ENCODE measurements at regions of chr22 and their contacts with region 1.

Region 1: GRCh38 chr22:45640291-45640940 is 31.2 kb upstream of the ATXN10 start:
- DNase-seq: no peak
- H3K4me3 ChIP-seq: no peak overlapping the region
- H3K27ac ChIP-seq: no peak overlapping the region
- H3K27me3 ChIP-seq: peaks cover 0 to 42% (median 5%) of the 10 kb centered on the region in 45 donors
- CTCF ChIP-seq: no peak

Region 2: GRCh38 chr22:45584121-45584570 is 56.3 kb before region 1 on chr22:
- intact Hi-C with region 1: loop called (anchors 5 kb)
- DNase-seq: peak in 4 of 10 donors; percentile 17 to 58 (median 43)
- H3K4me3 ChIP-seq: no peak overlapping the region
- H3K27ac ChIP-seq: no peak overlapping the region
- H3K27me3 ChIP-seq: peaks cover 0 to 12% (median 0%) of the 10 kb centered on the region in 45 donors
- CTCF ChIP-seq: no peak

Region 3: DNA sequence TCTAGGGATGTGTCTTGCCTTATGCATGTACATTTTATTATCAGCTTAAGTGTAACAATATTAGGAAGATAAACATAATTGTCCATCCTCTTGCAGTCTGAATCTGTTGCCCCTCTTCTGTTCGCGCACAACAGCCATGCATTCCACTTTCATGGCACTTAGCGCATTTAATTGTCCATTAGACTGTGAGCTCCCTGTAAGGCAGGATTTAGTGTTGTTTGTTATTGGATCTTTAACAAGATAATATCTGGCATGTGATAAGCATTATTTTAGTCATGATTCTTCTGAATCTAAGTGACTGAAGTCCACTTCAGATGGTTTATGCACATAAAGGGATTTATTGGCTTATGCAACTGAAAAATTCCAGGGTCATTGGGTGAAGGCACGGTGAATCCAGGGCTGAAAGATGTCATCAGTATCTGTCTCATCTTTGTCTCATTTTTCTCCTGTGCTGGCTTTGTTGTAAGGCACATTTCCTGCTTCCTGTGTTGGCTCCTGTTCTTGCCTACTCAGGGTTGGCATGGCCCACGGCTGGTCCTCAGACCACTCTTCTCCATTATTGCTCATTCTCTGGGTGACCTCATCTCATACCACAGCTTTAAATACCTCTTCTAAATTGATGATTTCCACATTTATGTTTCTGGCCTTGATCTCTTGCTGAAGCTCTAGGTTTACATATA is 68.8 kb after region 1 on chr22:
- intact Hi-C with region 1: no loop called
- DNase-seq: no peak
- H3K4me3 ChIP-seq: no peak overlapping the region
- H3K27ac ChIP-seq: no peak overlapping the region
- H3K27me3 ChIP-seq: no peaks in the 10 kb centered on the region
- CTCF ChIP-seq: no peak

Measured in dorsolateral prefrontal cortex (tissue), 120 donors.